Kidney (tissue), 22 donors: ENCODE measurements at regions of chr10 and their contacts with region 1.

Region 1: DNA sequence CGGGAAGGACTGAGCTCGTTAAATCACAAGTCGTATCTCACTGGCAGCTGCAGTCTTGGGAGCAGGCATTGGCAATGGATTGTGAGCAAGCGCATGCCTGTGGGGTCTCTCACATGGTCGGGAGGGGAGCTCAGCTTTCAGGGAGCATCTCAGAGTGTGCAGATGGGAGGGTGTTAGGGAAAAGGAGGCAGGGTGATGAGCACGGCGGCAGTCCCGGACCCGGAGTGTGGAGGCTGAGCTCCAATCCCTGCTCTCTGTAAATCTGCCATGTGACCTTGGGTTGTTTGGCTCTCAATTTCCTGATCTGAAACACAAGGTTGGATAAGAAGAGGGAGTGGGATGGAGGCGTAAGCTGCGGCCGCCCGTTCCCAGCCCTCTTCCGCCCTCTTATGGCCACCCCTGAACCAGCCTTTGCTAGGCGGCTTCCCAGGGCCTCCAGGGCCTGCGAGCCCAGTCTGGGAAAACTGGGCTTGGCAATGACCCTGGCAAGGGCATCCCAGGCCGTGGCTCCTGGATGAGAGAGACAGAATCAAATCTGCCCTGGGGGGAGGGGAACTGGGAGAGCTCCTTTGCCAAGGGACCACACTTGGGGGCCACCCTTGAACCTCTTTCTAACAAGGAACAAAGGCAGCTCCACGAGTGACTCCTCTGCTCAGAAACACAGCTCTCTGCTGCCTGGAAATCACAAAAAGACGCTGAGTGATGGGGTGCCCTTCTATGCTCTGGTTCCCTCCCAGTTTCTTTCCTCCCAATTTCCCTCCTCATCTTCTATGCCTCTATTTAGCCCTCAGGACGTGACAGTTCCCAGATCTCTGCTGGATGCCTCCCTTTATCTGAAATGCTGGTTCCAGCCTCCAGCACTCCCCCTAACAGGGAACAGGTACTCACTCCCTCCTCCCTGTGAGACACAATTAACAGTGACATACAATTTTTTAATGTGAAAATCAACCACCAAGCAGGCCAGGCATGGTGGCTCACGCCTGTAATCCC is 41.7 kb upstream of the LOXL4 start:
- DNase-seq: peak; percentile 84 to 91 (median 87)
- H3K4me3 ChIP-seq: peak overlapping the region in 1 of 3 donors; percentile 22
- H3K27ac ChIP-seq: no peak overlapping the region
- H3K4me1 ChIP-seq: no peaks in the 10 kb centered on the region
- H3K27me3 ChIP-seq: no peaks in the 10 kb centered on the region
- CTCF ChIP-seq: peak; percentile 74

Region 2: DNA sequence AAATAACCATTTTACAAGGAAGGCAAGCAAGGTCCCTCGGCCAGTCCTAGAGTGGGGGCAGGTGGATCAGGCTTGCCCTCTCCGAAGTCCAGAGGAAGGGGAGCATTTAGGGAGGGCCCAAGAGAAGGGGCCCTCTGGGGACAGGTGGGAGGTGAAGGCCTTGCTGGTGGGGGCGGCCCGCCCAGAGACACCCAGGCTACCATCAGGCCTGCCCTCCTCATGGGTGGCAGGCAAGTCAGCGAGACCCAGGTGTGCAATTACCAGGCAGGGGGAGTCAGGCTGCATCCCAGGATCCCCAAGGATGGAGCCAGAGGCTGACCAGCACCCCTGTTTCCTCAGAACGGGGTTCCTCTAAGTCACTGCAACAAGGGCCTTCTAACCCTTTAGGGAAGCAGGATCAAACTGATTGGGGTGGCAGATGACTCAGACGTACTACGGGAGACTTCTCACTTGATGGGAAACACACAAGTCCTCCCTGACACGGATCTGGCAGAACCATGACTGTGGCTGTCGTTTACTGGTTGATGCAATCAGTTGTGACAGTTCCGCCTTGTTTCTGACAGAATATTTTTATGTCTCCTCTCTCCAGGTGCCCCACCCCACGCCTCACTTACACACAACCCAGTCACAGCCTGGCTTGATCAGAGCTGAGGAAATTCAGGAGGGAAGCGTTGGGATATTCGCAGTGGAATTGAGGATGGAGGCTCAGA is 49.9 kb before region 1 on chr10:
- intact Hi-C with region 1: loop called (anchors 10 kb)
- DNase-seq: no peak
- H3K4me3 ChIP-seq: no peak overlapping the region
- H3K27ac ChIP-seq: no peak overlapping the region
- H3K4me1 ChIP-seq: peaks cover 0 to 6% (median 2%) of the 10 kb centered on the region in 3 donors
- H3K27me3 ChIP-seq: no peaks in the 10 kb centered on the region
- CTCF ChIP-seq: no peak